ENCODE measurements at regions of chr5 and their contacts with region 1.

Region 1: DNA sequence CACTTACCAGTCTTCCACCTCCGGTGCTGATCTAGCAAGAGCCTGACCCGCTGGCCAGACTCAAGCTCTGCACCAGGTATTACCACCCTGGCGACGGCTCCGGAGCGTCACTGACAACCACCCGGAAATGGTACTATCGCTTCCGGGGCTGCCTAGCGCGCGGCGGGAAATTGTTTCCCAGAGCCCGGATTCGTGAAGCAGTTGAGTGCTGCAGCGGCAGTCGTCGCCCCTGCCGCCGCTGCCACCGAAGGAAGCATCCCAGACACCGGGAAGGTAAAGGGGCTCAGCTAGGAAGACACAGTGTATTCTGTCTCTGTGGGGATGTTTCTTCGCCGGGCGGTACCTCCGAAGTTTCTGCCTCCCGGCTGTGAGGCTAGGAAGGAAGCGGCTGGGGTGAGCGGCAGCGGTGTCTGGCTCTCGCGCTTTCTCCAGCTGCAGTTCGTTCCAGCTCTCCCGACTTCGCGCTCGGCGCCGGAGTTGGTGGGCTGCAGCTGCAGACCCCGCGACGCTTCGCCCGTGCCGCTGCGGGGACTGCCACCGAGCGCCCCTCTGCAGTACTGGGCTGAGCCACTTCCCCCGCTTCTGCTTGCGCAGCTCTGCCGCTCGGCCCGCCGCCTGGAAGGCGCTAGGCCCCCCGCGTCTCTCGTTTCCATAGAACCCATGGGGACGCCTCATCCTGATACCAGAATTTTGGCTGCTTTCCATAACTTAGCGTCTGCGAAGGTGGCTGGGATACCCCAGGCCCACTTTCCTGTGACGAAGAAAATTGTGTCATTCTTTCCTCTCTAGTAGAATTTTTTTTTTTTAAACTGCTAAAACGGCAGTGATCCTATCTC is at the starts of genes KIAA0825 and SLF1:
- DNase-seq: peak; percentile 84
- ATAC-seq: peak; percentile 98
- H3K4me3 ChIP-seq: peak within 1 kb of the TSS; percentile 82 to 88 (median 88)
- H3K27ac ChIP-seq: peak within 1 kb of the TSS; percentile 79
- H3K4me1 ChIP-seq: peaks cover 17% of the 10 kb centered on the region
- H3K27me3 ChIP-seq: no peaks in the 10 kb centered on the region; a peak in 1 of 5 replicates
- CTCF ChIP-seq: peak; percentile 17; the same call in 1 of the 2 replicates
- EP300 ChIP-seq: no peak
- POLR2A ChIP-seq: peak; percentile 61 to 70; a peak in 2 of 4 replicates
- RAD21 ChIP-seq: no peak
- total RNA-seq, gene KIAA0825: 0.51 and 0.77 TPM in 2 replicates
- total RNA-seq, gene SLF1: 9.1 and 10.4 TPM in 2 replicates

Region 2: DNA sequence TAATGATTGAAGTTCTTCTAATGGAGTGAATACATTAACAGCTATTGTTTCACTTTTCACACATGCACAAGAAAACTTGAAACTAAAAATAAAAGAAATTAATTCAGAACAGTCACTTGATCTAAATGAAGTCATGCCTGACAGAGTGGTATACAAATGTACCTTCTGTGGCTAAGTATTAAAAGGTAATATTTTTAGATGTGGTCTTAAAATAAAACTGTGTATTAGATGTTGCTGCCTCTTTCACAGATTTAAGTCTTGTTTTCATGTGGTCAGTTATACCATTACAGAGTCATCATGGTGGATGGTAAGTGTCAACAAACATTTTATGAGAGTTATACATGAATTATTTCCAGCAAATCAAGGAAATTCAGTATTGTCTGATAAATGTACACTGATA is 47.3 kb before region 1 on chr5:
- CTCF ChIA-PET with region 1: no interaction called
- POLR2A ChIA-PET with region 1: no interaction called
- in situ Hi-C with region 1: no loop called
- intact Hi-C with region 1: no loop called
- DNase-seq: no peak
- ATAC-seq: no peak
- H3K4me3 ChIP-seq: no peak overlapping the region
- H3K27ac ChIP-seq: no peak overlapping the region
- H3K4me1 ChIP-seq: no peaks in the 10 kb centered on the region
- H3K27me3 ChIP-seq: no peaks in the 10 kb centered on the region
- CTCF ChIP-seq: no peak
- EP300 ChIP-seq: no peak
- POLR2A ChIP-seq: no peak
- RAD21 ChIP-seq: no peak

Region 3: DNA sequence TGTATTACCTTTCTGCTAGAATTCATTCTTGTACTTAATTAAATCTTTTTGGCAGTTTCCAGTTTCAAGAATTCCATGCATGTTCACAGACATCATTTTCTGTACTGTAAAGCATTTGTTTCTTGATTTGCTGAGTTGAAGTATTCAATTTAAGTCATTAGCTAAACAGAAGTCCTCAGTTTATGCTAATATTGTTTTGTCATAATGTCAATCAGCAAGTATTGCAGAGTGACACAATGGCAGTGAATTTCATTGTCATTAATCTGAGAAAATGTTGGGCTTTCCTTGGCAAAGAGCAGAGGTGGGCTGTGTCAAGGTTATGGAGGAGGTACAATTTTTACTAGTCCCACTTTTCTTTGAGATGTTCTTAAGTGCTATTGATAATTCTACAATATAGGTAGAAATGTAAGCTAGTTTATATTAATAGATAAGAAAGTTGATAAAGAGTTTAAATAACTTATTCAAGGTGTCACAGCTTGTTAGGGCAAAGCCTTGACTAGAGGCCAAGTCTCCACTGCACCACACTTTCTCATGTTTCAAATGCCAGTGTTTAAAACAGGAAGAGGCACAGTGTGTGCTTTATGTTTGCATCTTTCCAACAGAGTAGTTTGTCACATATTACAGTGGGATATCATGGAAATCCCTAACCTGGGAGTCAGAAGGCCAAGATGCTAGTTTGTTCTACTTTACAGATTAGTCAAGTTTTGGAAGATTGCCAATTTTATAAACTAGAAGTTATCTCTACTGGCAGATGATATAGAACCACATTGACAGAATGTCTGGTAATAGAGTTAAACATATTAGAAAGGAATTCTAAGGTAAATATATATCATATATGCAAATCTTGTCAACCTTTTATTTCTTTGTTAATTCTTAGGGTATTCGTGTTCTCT is 56.0 kb after region 1 on chr5:
- CTCF ChIA-PET with region 1: no interaction called
- POLR2A ChIA-PET with region 1: no interaction called
- in situ Hi-C with region 1: no loop called
- intact Hi-C with region 1: no loop called
- DNase-seq: no peak
- ATAC-seq: no peak
- H3K4me3 ChIP-seq: no peak overlapping the region
- H3K27ac ChIP-seq: no peak overlapping the region
- H3K4me1 ChIP-seq: no peaks in the 10 kb centered on the region
- H3K27me3 ChIP-seq: no peaks in the 10 kb centered on the region
- CTCF ChIP-seq: no peak
- EP300 ChIP-seq: no peak
- POLR2A ChIP-seq: no peak
- RAD21 ChIP-seq: no peak

Region 4: DNA sequence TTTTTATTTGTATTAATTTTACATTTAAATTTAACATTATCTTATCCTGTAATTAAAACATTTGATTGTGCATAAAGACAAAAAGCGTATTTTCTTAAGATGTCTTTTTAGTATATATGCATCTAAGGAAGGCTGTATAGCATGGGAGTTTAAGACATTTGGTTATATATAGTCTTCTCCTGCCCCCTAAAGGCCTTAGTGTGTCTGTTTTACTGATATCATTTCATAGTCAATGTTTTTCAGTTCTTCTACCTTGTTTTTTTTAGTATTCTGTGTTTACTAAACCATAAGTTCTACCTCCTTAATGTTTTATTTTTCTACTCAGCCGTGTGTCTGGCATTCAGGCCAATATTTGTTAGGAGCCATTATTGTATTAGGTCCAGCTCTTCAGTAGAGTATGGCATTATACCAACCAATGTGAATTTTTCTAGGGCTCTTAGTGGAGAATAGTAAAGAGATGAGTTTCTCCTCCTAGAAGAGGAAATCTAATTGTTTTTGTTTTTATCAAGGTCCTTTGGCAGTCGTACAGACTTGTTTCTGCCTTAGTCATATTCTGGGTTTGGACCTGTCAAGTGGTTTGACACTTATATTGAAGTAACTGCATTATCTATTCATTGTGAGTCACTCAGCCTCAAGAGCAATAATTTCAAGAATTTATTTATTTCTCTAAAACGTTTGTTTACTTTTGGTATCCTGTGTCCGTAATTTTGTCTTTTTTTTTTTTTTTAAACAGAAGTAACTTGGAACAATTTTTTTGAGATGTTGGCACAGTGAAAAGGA is 74.5 kb after region 1 on chr5:
- CTCF ChIA-PET with region 1: no interaction called
- POLR2A ChIA-PET with region 1: no interaction called
- in situ Hi-C with region 1: no loop called
- intact Hi-C with region 1: loop called (anchors 2 kb)
- DNase-seq: peak; percentile 33
- ATAC-seq: peak; percentile 69
- H3K4me3 ChIP-seq: no peak overlapping the region
- H3K27ac ChIP-seq: no peak overlapping the region
- H3K4me1 ChIP-seq: no peaks in the 10 kb centered on the region
- H3K27me3 ChIP-seq: no peaks in the 10 kb centered on the region
- CTCF ChIP-seq: peak; percentile 38
- EP300 ChIP-seq: no peak
- POLR2A ChIP-seq: no peak
- RAD21 ChIP-seq: no peak

Region 5: DNA sequence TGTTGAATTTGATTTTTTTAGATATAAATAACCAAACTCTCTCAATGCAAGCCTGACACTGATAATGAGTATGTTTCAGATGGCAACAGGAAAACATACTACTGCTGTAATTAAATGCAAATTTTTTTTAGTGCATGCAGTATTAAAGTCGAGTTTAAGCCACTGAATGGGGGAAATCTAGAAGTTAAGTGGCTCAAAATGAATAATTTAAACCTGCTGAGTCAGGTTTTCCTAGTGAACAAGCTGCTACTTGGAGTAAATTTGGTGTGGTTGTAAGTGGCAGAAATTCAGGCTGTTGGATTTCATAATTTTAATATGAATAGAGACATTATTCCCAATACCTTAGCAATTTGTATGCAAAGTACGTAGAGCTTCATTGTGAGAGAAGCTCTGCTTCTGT is 121.6 kb after region 1 on chr5:
- CTCF ChIA-PET with region 1: interaction called, 7 read pairs
- POLR2A ChIA-PET with region 1: no interaction called
- in situ Hi-C with region 1: loop called (anchors 5 kb)
- intact Hi-C with region 1: loop called (anchors 1 kb)
- DNase-seq: no peak
- ATAC-seq: no peak
- H3K4me3 ChIP-seq: no peak overlapping the region
- H3K27ac ChIP-seq: no peak overlapping the region
- H3K4me1 ChIP-seq: no peaks in the 10 kb centered on the region
- H3K27me3 ChIP-seq: no peaks in the 10 kb centered on the region
- CTCF ChIP-seq: no peak
- EP300 ChIP-seq: no peak
- POLR2A ChIP-seq: no peak
- RAD21 ChIP-seq: no peak

Region 6: GRCh38 chr5:94849821-94850736 is 231.4 kb after region 1 on chr5:
- CTCF ChIA-PET with region 1: no interaction called
- POLR2A ChIA-PET with region 1: no interaction called
- in situ Hi-C with region 1: no loop called
- intact Hi-C with region 1: loop called (anchors 1 kb)
- DNase-seq: peak; percentile 34
- ATAC-seq: peak; percentile 95
- H3K4me3 ChIP-seq: no peak overlapping the region
- H3K27ac ChIP-seq: no peak overlapping the region
- H3K4me1 ChIP-seq: no peaks in the 10 kb centered on the region
- H3K27me3 ChIP-seq: no peaks in the 10 kb centered on the region
- CTCF ChIP-seq: peak; percentile 73
- EP300 ChIP-seq: no peak
- POLR2A ChIP-seq: no peak
- RAD21 ChIP-seq: no peak